Endothelial cell of umbilical vein (primary cell): ENCODE measurements at regions of chr10 and their contacts with region 1.

Region 1: GRCh38 chr10:61992671-61993668 is 91.5 kb downstream of the ARID5B start:
- DNase-seq: peak; percentile 78
- H3K4me3 ChIP-seq: peak overlapping the region in 1 of 3 experiments; percentile 46
- H3K27ac ChIP-seq: peak overlapping the region; percentile 50
- H3K4me1 ChIP-seq: peaks cover 23% of the 10 kb centered on the region
- H3K27me3 ChIP-seq: no peaks in the 10 kb centered on the region
- CTCF ChIP-seq: no peak
- POLR2A ChIP-seq: no peak

Region 2: GRCh38 chr10:61175316-61175715 is 817.7 kb before region 1 on chr10:
- CTCF ChIA-PET with region 1: no interaction called
- POLR2A ChIA-PET with region 1: no interaction called
- dilution Hi-C with region 1: no loop called
- intact Hi-C with region 1: no loop called
- DNase-seq: no peak
- H3K4me3 ChIP-seq: no peak overlapping the region
- H3K27ac ChIP-seq: no peak overlapping the region
- H3K4me1 ChIP-seq: no peaks in the 10 kb centered on the region
- H3K27me3 ChIP-seq: peaks cover 0 to 5% of the 10 kb centered on the region in 2 experiments
- CTCF ChIP-seq: no peak
- POLR2A ChIP-seq: no peak

Region 3: DNA sequence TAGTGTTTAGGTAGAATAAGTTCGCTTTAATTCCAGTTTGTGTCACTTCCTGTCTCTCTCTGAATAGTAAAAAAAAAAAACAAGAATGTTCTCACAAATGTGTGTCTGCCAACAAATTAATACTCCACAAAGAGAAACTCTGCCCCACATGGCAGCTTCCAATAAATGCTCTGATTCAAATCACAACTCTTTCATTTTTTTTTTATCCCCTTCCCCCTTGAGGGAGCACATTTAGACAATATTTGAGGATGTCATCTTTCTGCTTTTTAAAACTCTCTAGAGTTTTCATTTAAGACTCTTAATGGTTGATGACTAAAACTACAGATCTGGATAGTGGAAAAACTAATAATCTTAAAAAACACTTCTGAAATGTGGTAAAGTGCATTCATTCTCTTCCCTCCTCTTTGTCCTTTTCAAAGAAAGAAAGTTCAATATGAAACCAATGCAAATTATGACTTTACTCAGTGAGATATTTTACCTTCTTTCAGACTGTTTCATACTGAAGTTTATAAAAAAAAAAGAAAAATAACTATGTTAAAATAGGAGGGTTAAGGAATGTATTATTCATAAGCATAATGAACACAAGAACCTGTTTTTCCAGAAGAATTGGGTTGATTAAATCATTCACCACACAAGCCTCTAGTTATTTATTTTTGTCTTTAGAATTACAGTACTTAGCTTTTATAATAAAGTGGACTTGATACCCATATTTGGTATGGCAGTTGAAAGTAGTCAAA is 49.1 kb before region 1 on chr10:
- CTCF ChIA-PET with region 1: interaction called, 3 read pairs
- POLR2A ChIA-PET with region 1: no interaction called
- dilution Hi-C with region 1: no loop called
- intact Hi-C with region 1: loop called (anchors 2 kb)
- DNase-seq: peak; percentile 80
- H3K4me3 ChIP-seq: peak overlapping the region in 1 of 3 experiments; percentile 66
- H3K27ac ChIP-seq: peak overlapping the region; percentile 58
- H3K4me1 ChIP-seq: peaks cover 32% of the 10 kb centered on the region
- H3K27me3 ChIP-seq: no peaks in the 10 kb centered on the region
- CTCF ChIP-seq: peak in 1 of 2 donors; percentile 18
- POLR2A ChIP-seq: no peak

Region 4: DNA sequence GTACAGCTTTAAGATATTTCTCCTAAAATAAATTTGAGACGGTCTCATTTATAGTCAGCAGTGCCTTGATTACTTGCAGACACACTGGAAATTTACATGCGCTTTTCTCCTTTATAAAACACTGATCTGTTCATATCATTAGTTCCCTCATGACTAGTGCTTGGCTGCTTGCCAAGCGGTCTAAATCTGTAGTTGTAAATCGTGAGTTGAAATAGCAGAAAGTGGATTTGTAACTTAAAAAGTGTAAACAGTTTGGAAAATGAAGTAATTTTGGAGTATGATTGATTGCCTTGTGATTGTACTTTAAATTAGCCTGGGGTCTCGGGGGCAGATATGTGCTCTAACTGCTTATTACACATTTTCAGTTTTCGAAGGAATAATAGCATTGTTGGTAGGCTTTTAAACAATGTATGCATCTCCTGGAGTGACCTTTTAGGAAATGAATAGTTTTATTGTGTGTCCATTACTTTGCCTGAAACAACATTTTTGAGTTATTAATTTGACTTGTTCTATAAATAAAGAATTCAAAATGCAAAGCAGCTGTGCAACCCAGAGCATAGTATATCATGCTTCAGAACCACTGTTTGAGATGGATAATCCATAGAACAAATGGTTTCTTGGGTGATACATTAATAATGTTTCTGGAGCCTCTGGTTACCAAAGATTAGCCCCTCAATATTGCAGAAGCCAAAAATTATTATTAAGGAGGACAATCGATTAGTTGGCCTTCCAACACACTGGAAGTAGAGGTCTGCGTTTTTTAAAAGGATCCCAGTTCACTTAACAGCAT is 18.2 kb before region 1 on chr10:
- CTCF ChIA-PET with region 1: no interaction called
- POLR2A ChIA-PET with region 1: no interaction called
- dilution Hi-C with region 1: no loop called
- intact Hi-C with region 1: loop called (anchors 1 kb)
- DNase-seq: peak; percentile 78
- H3K4me3 ChIP-seq: no peak overlapping the region
- H3K27ac ChIP-seq: no peak overlapping the region
- H3K4me1 ChIP-seq: peaks cover 26% of the 10 kb centered on the region
- H3K27me3 ChIP-seq: no peaks in the 10 kb centered on the region
- CTCF ChIP-seq: no peak
- POLR2A ChIP-seq: no peak

Region 5: GRCh38 chr10:62025901-62026879 is 33.2 kb after region 1 on chr10:
- CTCF ChIA-PET with region 1: interaction called, 5 read pairs
- POLR2A ChIA-PET with region 1: interaction called, 10 read pairs
- dilution Hi-C with region 1: no loop called
- intact Hi-C with region 1: no loop called
- DNase-seq: no peak
- H3K4me3 ChIP-seq: no peak overlapping the region
- H3K27ac ChIP-seq: no peak overlapping the region
- H3K4me1 ChIP-seq: peaks cover 12% of the 10 kb centered on the region
- H3K27me3 ChIP-seq: no peaks in the 10 kb centered on the region
- CTCF ChIP-seq: no peak
- POLR2A ChIP-seq: no peak

Region 6: GRCh38 chr10:62130948-62131347 is 138.0 kb after region 1 on chr10:
- CTCF ChIA-PET with region 1: no interaction called
- POLR2A ChIA-PET with region 1: no interaction called
- dilution Hi-C with region 1: no loop called
- intact Hi-C with region 1: loop called (anchors 2 kb)
- DNase-seq: peak; percentile 99
- H3K4me3 ChIP-seq: no peak overlapping the region
- H3K27ac ChIP-seq: peak overlapping the region; percentile 78
- H3K4me1 ChIP-seq: peaks cover 29% of the 10 kb centered on the region
- H3K27me3 ChIP-seq: no peaks in the 10 kb centered on the region
- CTCF ChIP-seq: no peak
- POLR2A ChIP-seq: peak; percentile 51

Region 7: GRCh38 chr10:62244780-62245467 is 252.0 kb after region 1 on chr10:
- CTCF ChIA-PET with region 1: interaction called, 8 read pairs
- POLR2A ChIA-PET with region 1: no interaction called
- dilution Hi-C with region 1: no loop called
- intact Hi-C with region 1: loop called (anchors 2 kb)
- DNase-seq: peak; percentile 86
- H3K4me3 ChIP-seq: no peak overlapping the region
- H3K27ac ChIP-seq: no peak overlapping the region
- H3K4me1 ChIP-seq: peaks cover 17% of the 10 kb centered on the region
- H3K27me3 ChIP-seq: no peaks in the 10 kb centered on the region
- CTCF ChIP-seq: peak; percentile 63 to 71
- POLR2A ChIP-seq: no peak

Region 8: GRCh38 chr10:62433181-62433692 is 440.3 kb after region 1 on chr10:
- CTCF ChIA-PET with region 1: no interaction called
- POLR2A ChIA-PET with region 1: no interaction called
- dilution Hi-C with region 1: no loop called
- intact Hi-C with region 1: no loop called
- DNase-seq: peak; percentile 72
- H3K4me3 ChIP-seq: no peak overlapping the region
- H3K27ac ChIP-seq: peak overlapping the region; percentile 79
- H3K4me1 ChIP-seq: peaks cover 19% of the 10 kb centered on the region
- H3K27me3 ChIP-seq: no peaks in the 10 kb centered on the region
- CTCF ChIP-seq: no peak
- POLR2A ChIP-seq: no peak